Naive thymus-derived CD4-positive, alpha-beta T cell (primary cell): ENCODE measurements at regions of chr3 and their contacts with region 1.

Region 1: DNA sequence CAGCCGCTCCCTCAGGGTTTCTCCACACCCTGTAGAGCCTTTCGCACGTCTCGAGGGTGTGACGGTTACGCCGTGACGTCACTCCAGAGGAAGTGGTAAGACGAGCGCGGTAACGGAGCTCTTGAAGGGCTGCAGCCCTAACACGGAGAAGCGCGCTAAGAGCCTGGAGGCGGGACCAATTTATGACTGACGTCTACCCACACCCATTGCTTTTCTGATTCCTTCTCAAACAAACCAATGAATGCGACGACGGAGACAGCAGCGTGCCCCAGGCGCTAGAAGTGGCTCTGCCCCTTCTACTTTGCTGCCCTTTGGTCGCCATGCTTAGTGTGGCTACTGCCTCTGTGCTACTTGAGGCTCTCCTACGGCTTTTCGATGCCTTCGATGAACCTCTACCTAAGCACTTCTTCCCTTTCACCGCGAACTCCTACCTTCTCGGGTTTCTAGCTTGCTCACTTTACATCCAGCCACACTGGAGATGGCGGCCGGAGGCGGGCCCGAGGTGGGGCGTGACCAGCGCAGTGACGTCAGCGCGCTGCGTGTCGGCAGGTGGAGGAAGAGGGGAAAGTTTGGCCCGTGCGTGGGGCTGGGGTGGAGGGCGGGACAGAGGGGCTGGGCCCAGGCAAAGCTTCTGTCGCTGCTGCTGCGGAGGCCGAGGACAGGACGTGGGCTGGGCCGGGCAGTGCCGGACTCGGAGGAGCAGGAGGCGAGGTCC is at the start of gene OXSR1:
- DNase-seq: peak; percentile 94 to 99 (median 98)
- ATAC-seq: peak; percentile 93
- H3K4me3 ChIP-seq: peak within 1 kb of the TSS; percentile 84
- H3K4me3 Mint-ChIP-seq: peak within 1 kb of the TSS; percentile 90 to 98 (median 96)
- H3K27ac ChIP-seq: peak within 1 kb of the TSS; percentile 98
- H3K27ac Mint-ChIP-seq: peak within 1 kb of the TSS; percentile 99 to 100 (median 100)
- H3K4me1 ChIP-seq: peaks cover 18 to 22% of the 10 kb centered on the region in 2 donors
- H3K4me1 Mint-ChIP-seq: peaks cover 25 to 49% (median 44%) of the 10 kb centered on the region in 7 donors
- H3K27me3 ChIP-seq: no peaks in the 10 kb centered on the region
- H3K27me3 Mint-ChIP-seq: peaks cover 0 to 6% (median 0%) of the 10 kb centered on the region in 5 donors
- total RNA-seq, gene OXSR1: 35.0 to 59.7 (median 38.8) TPM

Region 2: DNA sequence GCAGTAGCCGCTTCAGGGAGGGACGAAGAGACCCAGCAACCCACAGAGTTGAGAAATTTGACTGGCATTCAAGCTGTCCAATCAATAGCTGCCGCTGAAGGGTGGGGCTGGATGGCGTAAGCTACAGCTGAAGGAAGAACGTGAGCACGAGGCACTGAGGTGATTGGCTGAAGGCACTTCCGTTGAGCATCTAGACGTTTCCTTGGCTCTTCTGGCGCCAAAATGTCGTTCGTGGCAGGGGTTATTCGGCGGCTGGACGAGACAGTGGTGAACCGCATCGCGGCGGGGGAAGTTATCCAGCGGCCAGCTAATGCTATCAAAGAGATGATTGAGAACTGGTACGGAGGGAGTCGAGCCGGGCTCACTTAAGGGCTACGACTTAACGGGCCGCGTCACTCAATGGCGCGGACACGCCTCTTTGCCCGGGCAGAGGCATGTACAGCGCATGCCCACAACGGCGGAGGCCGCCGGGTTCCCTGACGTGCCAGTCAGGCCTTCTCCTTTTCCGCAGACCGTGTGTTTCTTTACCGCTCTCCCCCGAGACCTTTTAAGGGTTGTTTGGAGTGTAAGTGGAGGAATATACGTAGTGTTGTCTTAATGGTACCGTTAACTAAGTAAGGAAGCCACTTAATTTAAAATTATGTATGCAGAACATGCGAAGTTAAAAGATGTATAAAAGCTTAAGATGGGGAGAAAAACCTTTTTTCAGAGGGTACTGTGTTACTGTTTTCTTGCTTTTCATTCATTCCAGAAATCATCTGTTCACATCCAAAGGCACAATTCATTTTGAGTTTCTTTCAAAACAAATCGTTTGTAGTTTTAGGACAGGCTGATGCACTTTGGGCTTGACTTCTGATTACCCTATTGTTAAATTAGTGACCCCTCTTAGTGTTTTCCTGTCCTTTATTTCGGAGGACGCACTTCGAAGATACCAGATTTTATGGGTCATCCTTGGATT is 1171.5 kb before region 1 on chr3 and contains the start of gene MLH1:
- CTCF ChIA-PET with region 1: no interaction called
- POLR2A ChIA-PET with region 1: no interaction called
- intact Hi-C with region 1: loop called in 1 of 2 experiments (anchors 2 kb)
- DNase-seq: peak; percentile 91 to 100 (median 99)
- ATAC-seq: peak; percentile 90
- H3K4me3 ChIP-seq: peak within 1 kb of the TSS; percentile 80
- H3K4me3 Mint-ChIP-seq: peak within 1 kb of the TSS in 1 of 10 donors; percentile 26
- H3K27ac ChIP-seq: peak within 1 kb of the TSS; percentile 83
- H3K27ac Mint-ChIP-seq: no peak within 1 kb of the TSS
- H3K4me1 ChIP-seq: peaks cover 36 to 40% of the 10 kb centered on the region in 2 donors
- H3K4me1 Mint-ChIP-seq: peaks cover 23 to 43% (median 38%) of the 10 kb centered on the region in 7 donors
- H3K27me3 ChIP-seq: no peaks in the 10 kb centered on the region
- H3K27me3 Mint-ChIP-seq: no peaks in the 10 kb centered on the region
- total RNA-seq, gene MLH1: 26.4 to 42.0 (median 31.7) TPM

Region 3: DNA sequence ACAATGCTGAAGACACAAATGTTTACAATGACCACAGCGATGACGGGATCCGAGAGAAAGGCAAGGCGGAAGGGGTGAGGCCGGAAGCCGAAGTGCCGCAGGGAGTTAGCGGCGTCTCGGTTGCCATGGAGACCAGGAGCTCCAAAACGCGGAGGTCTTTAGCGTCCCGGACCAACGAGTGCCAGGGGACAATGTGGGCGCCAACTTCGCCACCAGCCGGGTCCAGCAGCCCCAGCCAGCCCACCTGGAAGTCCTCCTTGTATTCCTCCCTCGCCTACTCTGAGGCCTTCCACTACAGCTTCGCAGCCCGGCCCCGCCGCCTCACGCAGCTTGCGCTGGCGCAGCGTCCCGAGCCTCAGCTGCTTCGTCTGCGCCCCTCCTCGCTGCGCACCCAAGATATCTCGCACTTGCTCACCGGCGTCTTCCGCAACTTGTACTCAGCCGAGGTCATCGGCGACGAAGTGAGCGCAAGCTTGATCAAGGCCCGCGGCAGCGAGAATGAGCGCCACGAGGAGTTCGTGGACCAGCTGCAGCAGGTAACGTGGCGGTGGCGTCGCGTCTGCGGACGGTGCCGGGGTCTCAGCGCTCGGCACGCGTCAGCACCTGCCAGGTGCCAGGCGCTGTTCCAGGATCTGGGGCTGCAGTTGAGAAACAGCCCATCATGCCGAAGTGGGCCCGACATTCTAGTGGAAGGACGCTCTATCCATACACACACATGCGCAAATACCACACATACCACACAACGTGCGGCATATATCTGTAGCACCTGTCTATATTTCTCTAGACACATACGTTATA is 125.8 kb before region 1 on chr3 and contains the start of gene DLEC1:
- CTCF ChIA-PET with region 1: interaction called, 3 read pairs
- POLR2A ChIA-PET with region 1: interaction called, 19 read pairs
- intact Hi-C with region 1: loop called (anchors 1 kb)
- DNase-seq: peak; percentile 56 to 86 (median 83)
- ATAC-seq: peak; percentile 72
- H3K4me3 ChIP-seq: peak within 1 kb of the TSS; percentile 62
- H3K4me3 Mint-ChIP-seq: peak within 1 kb of the TSS; percentile 71 to 92 (median 88)
- H3K27ac ChIP-seq: peak within 1 kb of the TSS; percentile 62
- H3K27ac Mint-ChIP-seq: peak within 1 kb of the TSS; percentile 89 to 97 (median 92)
- H3K4me1 ChIP-seq: peaks cover 8 to 26% of the 10 kb centered on the region in 2 donors
- H3K4me1 Mint-ChIP-seq: peaks cover 20 to 37% (median 32%) of the 10 kb centered on the region in 7 donors
- H3K27me3 ChIP-seq: no peaks in the 10 kb centered on the region
- H3K27me3 Mint-ChIP-seq: peaks cover 0 to 7% (median 0%) of the 10 kb centered on the region in 5 donors
- total RNA-seq, gene DLEC1: 1.5 to 9.4 (median 7.5) TPM

Region 4: GRCh38 chr3:38151667-38152275 is 13.4 kb before region 1 on chr3:
- CTCF ChIA-PET with region 1: interaction called, 3 read pairs
- POLR2A ChIA-PET with region 1: interaction called, 5 read pairs
- intact Hi-C with region 1: loop called in 1 of 2 experiments (anchors 1 kb)
- DNase-seq: peak in 2 of 9 donors; percentile 15 to 18
- ATAC-seq: peak; percentile 84
- H3K4me3 ChIP-seq: no peak overlapping the region
- H3K4me3 Mint-ChIP-seq: peak overlapping the region in 1 of 10 donors; percentile 57
- H3K27ac ChIP-seq: no peak overlapping the region
- H3K27ac Mint-ChIP-seq: peak overlapping the region in 7 of 9 donors; percentile 19 to 80 (median 58)
- H3K4me1 ChIP-seq: peaks cover 0 to 14% of the 10 kb centered on the region in 2 donors
- H3K4me1 Mint-ChIP-seq: peaks cover 12 to 48% (median 30%) of the 10 kb centered on the region in 7 donors
- H3K27me3 ChIP-seq: no peaks in the 10 kb centered on the region
- H3K27me3 Mint-ChIP-seq: no peaks in the 10 kb centered on the region

Region 5: GRCh38 chr3:38453075-38453912 is 288.2 kb after region 1 on chr3 and contains the start of gene ACVR2B:
- CTCF ChIA-PET with region 1: no interaction called
- POLR2A ChIA-PET with region 1: no interaction called
- intact Hi-C with region 1: loop called (anchors 1 to 2 kb)
- DNase-seq: peak; percentile 20 to 83 (median 58)
- ATAC-seq: peak; percentile 74
- H3K4me3 ChIP-seq: peak within 1 kb of the TSS; percentile 74
- H3K4me3 Mint-ChIP-seq: peak within 1 kb of the TSS; percentile 88 to 99 (median 97)
- H3K27ac ChIP-seq: peak within 1 kb of the TSS; percentile 60
- H3K27ac Mint-ChIP-seq: peak within 1 kb of the TSS; percentile 59 to 95 (median 91)
- H3K4me1 ChIP-seq: peaks cover 5 to 12% of the 10 kb centered on the region in 2 donors
- H3K4me1 Mint-ChIP-seq: peaks cover 7 to 32% (median 25%) of the 10 kb centered on the region in 7 donors
- H3K27me3 ChIP-seq: no peaks in the 10 kb centered on the region
- H3K27me3 Mint-ChIP-seq: peaks cover 0 to 18% (median 0%) of the 10 kb centered on the region in 5 donors
- total RNA-seq, gene ACVR2B: 3.8 to 14.0 (median 8.3) TPM

Region 6: DNA sequence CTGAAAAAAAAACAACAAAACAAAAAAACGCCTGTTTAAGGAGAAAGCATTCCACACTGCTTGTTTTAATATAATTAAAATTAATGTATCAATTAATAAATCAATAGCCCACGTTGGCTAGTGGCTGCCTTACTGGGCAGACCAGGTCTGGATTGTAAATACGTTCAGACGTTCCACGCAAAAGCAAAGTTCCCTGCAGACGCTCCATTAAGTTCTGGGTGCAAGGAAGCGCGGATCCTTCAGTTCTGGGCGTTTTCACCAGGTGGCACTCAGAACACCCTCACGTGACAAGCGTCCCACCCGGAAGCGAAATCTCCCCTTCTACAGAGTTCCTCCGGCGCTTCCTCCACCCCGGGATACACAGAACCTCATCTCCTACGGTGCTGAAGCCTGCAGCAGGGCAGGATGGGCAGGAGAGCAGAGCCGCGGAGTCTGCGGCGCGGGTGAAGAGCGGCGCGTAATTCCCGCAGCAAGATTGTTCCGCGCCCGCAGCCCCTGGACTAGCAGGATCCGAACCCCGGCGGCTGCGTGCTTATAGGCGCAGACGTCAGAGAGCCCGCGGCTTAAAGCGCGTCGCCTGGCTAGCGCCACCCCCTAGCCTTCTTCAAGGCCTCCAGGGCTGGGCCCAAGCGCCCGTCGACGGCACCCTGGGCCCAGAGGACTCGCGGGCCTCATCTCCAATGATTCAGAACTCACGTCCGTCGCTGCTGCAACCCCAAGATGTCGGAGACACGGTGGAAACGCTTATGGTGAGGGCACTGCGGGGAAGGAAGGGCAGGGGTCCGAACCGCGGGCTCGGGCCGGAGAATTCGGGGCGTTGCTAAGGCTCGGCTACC is 1218.1 kb after region 1 on chr3 and contains the start of gene SLC25A38:
- CTCF ChIA-PET with region 1: no interaction called
- POLR2A ChIA-PET with region 1: no interaction called
- intact Hi-C with region 1: loop called in 1 of 2 experiments (anchors 10 kb)
- DNase-seq: peak; percentile 60 to 86 (median 84)
- ATAC-seq: peak; percentile 86
- H3K4me3 ChIP-seq: peak within 1 kb of the TSS; percentile 88
- H3K4me3 Mint-ChIP-seq: peak within 1 kb of the TSS; percentile 91 to 99 (median 97)
- H3K27ac ChIP-seq: peak within 1 kb of the TSS; percentile 96
- H3K27ac Mint-ChIP-seq: peak within 1 kb of the TSS; percentile 95 to 100 (median 99)
- H3K4me1 ChIP-seq: peaks cover 26 to 39% of the 10 kb centered on the region in 2 donors
- H3K4me1 Mint-ChIP-seq: peaks cover 36 to 59% (median 49%) of the 10 kb centered on the region in 7 donors
- H3K27me3 ChIP-seq: no peaks in the 10 kb centered on the region
- H3K27me3 Mint-ChIP-seq: no peaks in the 10 kb centered on the region
- total RNA-seq, gene SLC25A38: 30.3 to 50.2 (median 46.8) TPM